ENCODE measurements at regions of chr15 and their contacts with region 1.

Region 1: DNA sequence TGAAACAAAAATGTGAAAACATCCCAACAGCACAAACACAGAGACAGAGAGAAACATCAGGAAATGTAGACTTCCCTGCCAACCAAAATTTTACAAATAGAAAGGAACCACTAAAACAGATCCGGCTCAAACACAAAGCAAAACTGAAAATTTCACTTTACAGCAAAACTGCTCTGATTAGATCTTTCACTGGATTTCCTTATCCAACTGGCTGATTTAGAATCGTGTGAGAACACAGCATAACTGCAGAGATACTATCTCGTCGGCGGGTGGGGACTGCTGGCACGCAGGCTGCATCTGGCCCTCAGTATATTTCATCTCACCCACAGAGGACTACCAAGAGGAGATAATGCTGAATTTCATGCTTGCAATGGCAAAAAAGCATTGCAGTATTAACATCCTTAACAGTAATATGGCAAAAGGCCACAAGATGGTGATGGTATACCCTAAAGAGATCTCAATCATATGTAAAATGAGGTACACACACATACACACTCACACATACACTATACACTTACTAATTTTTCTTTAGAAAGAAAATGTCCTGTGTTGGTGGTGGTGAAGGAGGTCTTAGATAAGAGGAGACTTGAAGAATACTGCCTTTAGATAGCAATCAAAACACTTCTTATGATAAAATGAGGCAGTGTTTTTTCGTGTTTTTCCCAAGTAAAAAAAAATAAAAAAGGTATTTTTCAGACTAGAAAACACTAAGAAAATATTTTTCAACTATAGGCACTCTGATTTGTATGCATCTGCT is 10.6 kb upstream of the LEO1 start:
- DNase-seq: peak; percentile 73
- H3K4me3 Mint-ChIP-seq: peak overlapping the region; percentile 65
- H3K27ac Mint-ChIP-seq: peak overlapping the region; percentile 69
- H3K4me1 Mint-ChIP-seq: peaks cover 13% of the 10 kb centered on the region
- H3K27me3 Mint-ChIP-seq: no peaks in the 10 kb centered on the region

Region 2: GRCh38 chr15:51801391-51801835 is 180.8 kb before region 1 on chr15:
- CTCF ChIA-PET with region 1: no interaction called
- POLR2A ChIA-PET with region 1: no interaction called
- intact Hi-C with region 1: no loop called
- DNase-seq: no peak
- H3K4me3 Mint-ChIP-seq: no peak overlapping the region
- H3K27ac Mint-ChIP-seq: no peak overlapping the region
- H3K4me1 Mint-ChIP-seq: no peaks in the 10 kb centered on the region
- H3K27me3 Mint-ChIP-seq: no peaks in the 10 kb centered on the region

Region 3: DNA sequence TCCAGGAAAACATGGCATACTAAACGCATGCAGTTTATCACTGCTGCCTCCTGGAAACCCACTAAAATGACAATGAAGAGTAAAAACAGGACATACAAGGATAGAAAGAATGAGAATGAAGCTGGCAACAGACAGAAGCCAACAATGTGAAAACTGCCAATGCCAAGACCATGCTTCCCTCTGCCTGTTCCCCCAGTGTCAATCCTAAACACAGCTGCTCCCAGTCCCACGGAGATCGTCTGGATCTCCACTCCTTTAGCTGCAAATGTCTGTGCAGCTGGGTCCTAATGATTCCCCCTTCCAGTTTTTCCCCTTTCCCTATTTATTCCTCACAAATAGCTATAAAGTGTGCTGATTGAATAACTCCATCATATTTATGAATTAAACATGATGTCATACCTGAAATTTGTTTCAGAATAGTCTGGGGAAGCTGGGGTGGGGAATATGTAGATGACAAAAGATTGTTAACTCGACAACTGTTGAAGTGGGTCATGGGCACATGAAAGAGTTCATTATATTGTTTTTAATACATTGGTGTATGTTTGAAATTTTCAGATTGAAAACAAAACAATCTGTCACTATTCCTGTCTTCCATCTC is 26.6 kb before region 1 on chr15:
- CTCF ChIA-PET with region 1: no interaction called
- POLR2A ChIA-PET with region 1: no interaction called
- intact Hi-C with region 1: no loop called
- DNase-seq: no peak
- H3K4me3 Mint-ChIP-seq: no peak overlapping the region
- H3K27ac Mint-ChIP-seq: no peak overlapping the region
- H3K4me1 Mint-ChIP-seq: peaks cover 2% of the 10 kb centered on the region
- H3K27me3 Mint-ChIP-seq: no peaks in the 10 kb centered on the region

Region 4: DNA sequence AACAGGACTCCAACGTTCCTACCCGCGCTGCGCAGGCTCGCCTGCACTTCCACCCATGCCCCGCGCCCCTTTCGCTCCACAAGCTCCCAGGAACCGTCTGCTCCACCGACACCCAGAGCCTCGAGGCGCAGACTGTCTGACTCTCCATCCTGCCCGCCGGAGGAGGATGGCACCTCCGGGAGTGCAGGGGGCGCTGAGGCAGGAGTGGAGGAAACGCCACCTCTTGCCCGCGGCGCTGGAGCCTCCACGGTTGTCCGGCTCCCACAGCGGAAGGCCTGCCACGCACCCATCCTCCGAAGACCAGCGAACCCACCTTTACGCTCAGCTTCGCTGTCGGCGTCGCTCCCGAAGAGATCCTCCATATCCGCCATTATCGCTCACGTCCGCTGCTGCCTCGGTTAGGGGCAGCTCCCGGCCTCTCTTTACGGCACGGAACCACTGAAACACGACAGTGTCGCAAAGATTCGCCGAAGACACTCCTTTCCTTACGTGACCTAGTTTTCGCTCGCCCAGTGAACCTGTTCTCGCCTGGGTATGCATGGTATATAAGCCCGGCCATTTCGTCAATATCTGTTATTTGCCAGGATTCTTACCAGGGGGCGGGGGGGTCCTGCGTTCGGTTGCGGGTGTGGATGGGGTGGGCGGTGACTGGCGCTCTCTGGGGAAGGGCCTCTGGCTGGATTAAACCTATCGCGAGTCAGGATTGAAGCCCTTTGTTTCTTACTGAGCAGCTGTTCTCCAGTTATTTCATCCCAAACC is 10.6 kb before region 1 on chr15 and contains the start of gene LEO1:
- CTCF ChIA-PET with region 1: interaction called, 14 read pairs
- POLR2A ChIA-PET with region 1: interaction called, 13 read pairs
- intact Hi-C with region 1: loop called (anchors 1 kb)
- DNase-seq: peak; percentile 93
- H3K4me3 Mint-ChIP-seq: peak within 1 kb of the TSS; percentile 96
- H3K27ac Mint-ChIP-seq: peak within 1 kb of the TSS; percentile 94
- H3K4me1 Mint-ChIP-seq: peaks cover 17% of the 10 kb centered on the region
- H3K27me3 Mint-ChIP-seq: peaks cover 2% of the 10 kb centered on the region
- total RNA-seq, gene LEO1: 27.3 to 28.3 TPM

Region 5: DNA sequence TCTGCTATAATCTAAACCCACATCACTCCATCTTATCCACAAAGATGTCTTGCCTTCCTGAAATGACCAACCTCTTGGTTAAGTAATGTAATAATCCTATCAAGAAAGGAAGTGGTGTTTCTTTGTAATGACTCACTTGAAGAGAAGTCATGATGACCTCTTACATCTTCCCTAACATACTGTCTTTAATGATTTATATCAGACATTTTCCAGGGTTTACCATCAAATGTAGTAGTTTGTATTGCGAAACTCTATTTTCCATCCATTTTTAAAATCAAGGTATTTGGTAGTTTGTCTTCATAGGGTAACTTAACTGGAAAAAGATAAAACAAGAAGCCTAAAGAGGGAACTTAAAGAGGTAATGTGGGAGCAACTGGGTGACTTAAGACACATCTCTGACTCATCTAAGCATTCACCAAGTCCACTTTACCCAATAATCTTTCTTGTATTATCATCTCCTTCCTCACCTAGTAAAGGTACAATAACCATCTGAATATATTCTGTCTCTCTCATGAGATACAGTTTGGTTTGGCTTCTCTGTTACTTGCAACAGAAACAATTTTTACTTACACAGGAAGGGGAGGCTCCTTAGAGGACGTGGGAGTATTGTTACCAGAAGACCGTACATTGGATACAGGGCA is 31.1 kb after region 1 on chr15:
- CTCF ChIA-PET with region 1: no interaction called
- POLR2A ChIA-PET with region 1: no interaction called
- intact Hi-C with region 1: loop called (anchors 2 kb)
- DNase-seq: no peak
- H3K4me3 Mint-ChIP-seq: no peak overlapping the region
- H3K27ac Mint-ChIP-seq: peak overlapping the region; percentile 82
- H3K4me1 Mint-ChIP-seq: peaks cover 50% of the 10 kb centered on the region
- H3K27me3 Mint-ChIP-seq: no peaks in the 10 kb centered on the region

Region 6: DNA sequence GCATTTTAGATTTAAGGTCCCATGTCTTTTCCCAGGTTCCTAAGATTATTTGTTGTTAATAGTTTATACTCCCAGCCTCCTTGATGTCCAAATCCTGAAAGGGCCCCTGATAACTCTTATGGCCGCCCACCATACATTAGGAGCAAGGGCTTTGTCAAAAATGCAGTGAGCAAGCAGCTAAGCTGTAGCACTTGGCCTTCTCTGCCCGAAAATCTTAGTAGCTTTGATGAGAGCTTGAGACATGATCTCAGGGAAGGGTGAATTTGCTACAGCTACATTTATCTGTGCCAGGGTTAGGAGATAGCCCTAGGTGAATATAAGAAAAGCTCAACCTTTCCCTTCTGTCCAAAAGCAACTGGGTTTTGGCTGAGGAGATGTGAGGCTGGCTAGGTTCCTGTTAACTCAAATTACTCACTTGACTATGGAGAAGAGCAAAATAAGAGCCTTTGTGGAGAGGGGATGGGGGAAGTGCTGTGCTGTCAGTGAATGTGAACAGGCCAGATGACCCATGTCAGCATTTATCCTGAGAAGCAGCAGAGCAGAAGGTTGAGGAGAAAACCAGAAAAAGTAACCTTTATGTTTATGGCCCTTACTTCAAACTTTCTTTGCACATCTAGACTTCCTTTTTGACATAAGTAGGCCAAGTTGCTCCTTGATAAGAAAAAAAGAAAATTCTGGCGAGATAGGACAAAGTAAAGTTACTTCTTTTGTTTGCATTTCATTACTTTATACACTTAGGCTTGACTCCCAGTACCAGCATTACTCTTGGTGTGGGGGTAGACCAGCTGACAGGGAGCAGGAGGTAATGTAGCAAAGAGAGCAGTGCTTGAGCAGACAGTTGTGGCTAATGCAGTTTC is 58.0 kb after region 1 on chr15:
- CTCF ChIA-PET with region 1: interaction called, 15 read pairs
- POLR2A ChIA-PET with region 1: no interaction called
- intact Hi-C with region 1: loop called (anchors 2 kb)
- DNase-seq: no peak
- H3K4me3 Mint-ChIP-seq: no peak overlapping the region
- H3K27ac Mint-ChIP-seq: no peak overlapping the region
- H3K4me1 Mint-ChIP-seq: peaks cover 54% of the 10 kb centered on the region
- H3K27me3 Mint-ChIP-seq: no peaks in the 10 kb centered on the region

Region 7: GRCh38 chr15:52139599-52140491 is 157.7 kb after region 1 on chr15:
- CTCF ChIA-PET with region 1: interaction called, 6 read pairs
- POLR2A ChIA-PET with region 1: no interaction called
- intact Hi-C with region 1: loop called (anchors 1 kb)
- DNase-seq: peak; percentile 79
- H3K4me3 Mint-ChIP-seq: no peak overlapping the region
- H3K27ac Mint-ChIP-seq: no peak overlapping the region
- H3K4me1 Mint-ChIP-seq: peaks cover 16% of the 10 kb centered on the region
- H3K27me3 Mint-ChIP-seq: no peaks in the 10 kb centered on the region

Region 8: GRCh38 chr15:52217186-52217585 is 235.0 kb after region 1 on chr15:
- CTCF ChIA-PET with region 1: no interaction called
- POLR2A ChIA-PET with region 1: no interaction called
- intact Hi-C with region 1: loop called (anchors 5 kb)
- DNase-seq: peak; percentile 55
- H3K4me3 Mint-ChIP-seq: no peak overlapping the region
- H3K27ac Mint-ChIP-seq: no peak overlapping the region
- H3K4me1 Mint-ChIP-seq: peaks cover 15% of the 10 kb centered on the region
- H3K27me3 Mint-ChIP-seq: no peaks in the 10 kb centered on the region

Region 9: DNA sequence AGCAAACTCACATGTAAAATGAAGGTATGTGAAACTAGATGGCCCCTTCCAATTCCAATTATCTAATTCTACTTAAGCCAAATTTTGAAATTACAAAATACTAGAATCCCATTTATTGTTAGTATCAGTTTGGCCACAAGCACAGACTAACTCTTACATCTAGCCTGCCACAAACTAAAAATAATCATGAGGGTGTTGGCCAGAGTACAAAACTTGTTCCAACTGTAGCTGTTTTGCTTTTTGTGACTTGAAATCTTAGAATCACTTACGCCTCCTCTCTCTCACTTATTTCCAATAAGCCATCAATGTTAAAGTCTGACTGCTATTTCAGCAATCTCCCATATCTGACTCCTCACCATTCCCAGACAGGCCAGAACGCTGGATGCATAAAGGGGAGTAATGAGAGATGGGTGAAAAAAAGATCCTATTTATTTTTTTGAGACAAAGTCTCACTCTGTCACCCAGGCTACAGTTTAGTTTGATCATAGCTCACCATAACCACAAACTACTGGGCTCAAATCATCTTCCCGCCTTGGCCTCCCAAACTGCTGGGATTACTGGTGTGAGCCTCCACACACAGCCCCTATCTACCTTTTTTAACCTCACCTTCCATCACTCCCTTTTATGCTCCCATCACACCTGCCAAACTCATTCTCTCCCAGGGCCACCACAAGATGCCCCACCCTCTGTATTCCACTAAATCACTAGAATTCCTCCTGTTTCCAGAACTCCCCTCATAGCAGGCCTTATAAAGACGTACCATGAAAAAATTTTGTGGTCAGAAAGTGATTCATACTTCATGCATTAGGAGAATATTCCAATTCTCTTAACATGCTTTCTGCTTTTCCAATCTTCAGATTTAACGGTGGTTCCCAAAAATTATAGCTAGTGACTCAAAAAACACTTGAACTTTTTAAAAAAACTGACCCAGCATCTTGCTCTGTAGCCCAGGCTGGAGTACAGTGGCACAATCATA is 660.5 kb after region 1 on chr15:
- CTCF ChIA-PET with region 1: no interaction called
- POLR2A ChIA-PET with region 1: no interaction called
- intact Hi-C with region 1: no loop called
- DNase-seq: no peak
- H3K4me3 Mint-ChIP-seq: no peak overlapping the region
- H3K27ac Mint-ChIP-seq: no peak overlapping the region
- H3K4me1 Mint-ChIP-seq: peaks cover 8% of the 10 kb centered on the region
- H3K27me3 Mint-ChIP-seq: no peaks in the 10 kb centered on the region